ENCODE measurements at regions of chr10 and their contacts with region 1.

Region 1: GRCh38 chr10:127853868-127854768 is 38.6 kb downstream of the CLRN3 start:
- DNase-seq: peak; percentile 45 to 55 (median 51)
- ATAC-seq: peak; percentile 95
- H3K4me3 ChIP-seq: no peak overlapping the region
- H3K27ac ChIP-seq: no peak overlapping the region
- H3K4me1 ChIP-seq: no peaks in the 10 kb centered on the region
- H3K27me3 ChIP-seq: no peaks in the 10 kb centered on the region
- CTCF ChIP-seq: peak; percentile 55 to 69 (median 59)
- EP300 ChIP-seq: no peak
- POLR2A ChIP-seq: no peak
- RAD21 ChIP-seq: peak; percentile 52 to 78

Region 2: GRCh38 chr10:127715782-127716378 is 138.2 kb before region 1 on chr10:
- CTCF ChIA-PET with region 1: no interaction called
- POLR2A ChIA-PET with region 1: no interaction called
- in situ Hi-C with region 1: no loop called
- intact Hi-C with region 1: loop called (anchors 5 kb)
- DNase-seq: peak in 1 of 4 experiments; percentile 7
- ATAC-seq: no peak
- H3K4me3 ChIP-seq: no peak overlapping the region
- H3K27ac ChIP-seq: no peak overlapping the region
- H3K4me1 ChIP-seq: no peaks in the 10 kb centered on the region
- H3K27me3 ChIP-seq: no peaks in the 10 kb centered on the region
- CTCF ChIP-seq: peak in 1 of 3 experiments; percentile 34; a peak in 2 of 6 replicates
- EP300 ChIP-seq: no peak
- POLR2A ChIP-seq: no peak
- RAD21 ChIP-seq: peak in 1 of 2 experiments; percentile 37; a peak in 2 of 4 replicates